ENCODE measurements at regions of chr20 and their contacts with region 1.

Region 1: DNA sequence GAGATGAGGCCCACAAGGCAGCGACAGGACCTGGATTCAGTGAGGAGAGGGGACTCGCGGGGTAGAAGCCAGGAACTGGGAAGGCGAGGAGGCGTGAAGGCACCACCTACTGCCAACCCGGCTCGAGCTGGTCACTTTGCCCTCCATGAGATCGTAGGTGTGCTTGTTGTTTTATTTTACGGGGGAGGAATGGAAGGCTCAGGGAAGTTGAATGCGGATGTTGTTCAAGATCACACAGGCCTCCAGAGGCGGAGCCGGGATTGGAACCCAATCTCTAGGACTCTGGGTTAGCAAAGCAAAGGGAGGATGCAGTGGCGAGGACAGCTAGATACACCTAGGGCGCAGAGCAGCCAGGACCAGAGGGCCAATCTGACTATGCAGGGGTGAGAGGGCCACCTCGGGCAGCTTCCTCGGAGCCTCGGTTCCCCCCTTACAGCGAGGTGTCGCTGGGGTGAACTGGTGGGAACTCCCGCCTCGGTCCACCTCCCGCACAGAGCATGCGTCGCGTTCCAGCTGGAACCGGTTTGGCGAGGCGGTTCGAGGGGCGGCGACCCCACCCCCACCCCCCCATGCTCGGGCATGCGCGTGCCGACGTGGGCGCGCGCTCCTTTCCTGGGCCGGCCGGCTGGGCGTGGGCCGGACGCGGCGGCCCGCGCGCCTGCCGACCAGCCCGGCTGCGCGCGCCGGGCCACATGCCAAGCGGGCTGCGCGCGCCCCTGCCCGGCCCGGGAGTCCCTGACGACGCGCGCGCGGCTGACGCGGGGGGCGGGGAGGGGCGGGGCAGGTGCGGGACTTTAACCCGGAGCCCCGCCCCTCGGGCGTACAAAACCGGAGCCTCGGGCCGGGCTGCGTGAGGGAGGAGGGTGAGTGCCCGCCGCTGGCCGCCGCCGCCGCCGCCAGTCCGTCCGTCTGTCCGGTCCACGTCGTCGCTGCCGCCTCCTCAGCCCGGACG is 80.4 kb upstream of the MYL9 start:
- DNase-seq: peak; percentile 85
- H3K4me3 ChIP-seq: peak overlapping the region in 1 of 3 experiments; percentile 74
- H3K27ac ChIP-seq: peak overlapping the region; percentile 2
- H3K4me1 ChIP-seq: peaks cover 28% of the 10 kb centered on the region
- H3K27me3 ChIP-seq: no peaks in the 10 kb centered on the region
- CTCF ChIP-seq: no peak
- POLR2A ChIP-seq: peak; percentile 79

Region 2: GRCh38 chr20:36113566-36114250 is 347.2 kb before region 1 on chr20:
- CTCF ChIA-PET with region 1: no interaction called
- POLR2A ChIA-PET with region 1: no interaction called
- dilution Hi-C with region 1: no loop called
- intact Hi-C with region 1: no loop called
- DNase-seq: no peak
- H3K4me3 ChIP-seq: no peak overlapping the region
- H3K27ac ChIP-seq: no peak overlapping the region
- H3K4me1 ChIP-seq: no peaks in the 10 kb centered on the region
- H3K27me3 ChIP-seq: peaks cover 3 to 13% of the 10 kb centered on the region in 2 experiments
- CTCF ChIP-seq: no peak
- POLR2A ChIP-seq: no peak

Region 3: GRCh38 chr20:36132802-36133211 is 328.1 kb before region 1 on chr20:
- CTCF ChIA-PET with region 1: no interaction called
- POLR2A ChIA-PET with region 1: no interaction called
- dilution Hi-C with region 1: no loop called
- intact Hi-C with region 1: no loop called
- DNase-seq: no peak
- H3K4me3 ChIP-seq: no peak overlapping the region
- H3K27ac ChIP-seq: no peak overlapping the region
- H3K4me1 ChIP-seq: no peaks in the 10 kb centered on the region
- H3K27me3 ChIP-seq: no peaks in the 10 kb centered on the region
- CTCF ChIP-seq: no peak
- POLR2A ChIP-seq: no peak

Region 4: GRCh38 chr20:36493013-36493800 is 32.3 kb after region 1 on chr20:
- CTCF ChIA-PET with region 1: interaction called, 11 read pairs
- POLR2A ChIA-PET with region 1: no interaction called
- dilution Hi-C with region 1: no loop called
- intact Hi-C with region 1: loop called (anchors 2 kb)
- DNase-seq: peak; percentile 34
- H3K4me3 ChIP-seq: no peak overlapping the region
- H3K27ac ChIP-seq: no peak overlapping the region
- H3K4me1 ChIP-seq: peaks cover 19% of the 10 kb centered on the region
- H3K27me3 ChIP-seq: no peaks in the 10 kb centered on the region
- CTCF ChIP-seq: peak; percentile 22 to 33
- POLR2A ChIP-seq: no peak

Region 5: GRCh38 chr20:36541227-36541763 is 80.4 kb after region 1 on chr20 and contains the start of gene MYL9:
- CTCF ChIA-PET with region 1: no interaction called
- POLR2A ChIA-PET with region 1: no interaction called
- dilution Hi-C with region 1: no loop called
- intact Hi-C with region 1: loop called (anchors 5 kb)
- DNase-seq: peak; percentile 43
- H3K4me3 ChIP-seq: peak within 1 kb of the TSS; percentile 26 to 77 (median 55)
- H3K27ac ChIP-seq: peak within 1 kb of the TSS; percentile 53
- H3K4me1 ChIP-seq: peaks cover 11% of the 10 kb centered on the region
- H3K27me3 ChIP-seq: no peaks in the 10 kb centered on the region
- CTCF ChIP-seq: no peak
- POLR2A ChIP-seq: peak; percentile 49
- total RNA-seq, gene MYL9: 90.4 and 116 TPM in 2 replicates

Region 6: GRCh38 chr20:36573103-36573794 is 112.3 kb after region 1 on chr20 and contains the start of gene TGIF2:
- CTCF ChIA-PET with region 1: no interaction called
- POLR2A ChIA-PET with region 1: no interaction called
- dilution Hi-C with region 1: no loop called
- intact Hi-C with region 1: loop called (anchors 2 kb)
- DNase-seq: peak; percentile 84
- H3K4me3 ChIP-seq: peak within 1 kb of the TSS; percentile 55 to 87 (median 85)
- H3K27ac ChIP-seq: peak within 1 kb of the TSS; percentile 71
- H3K4me1 ChIP-seq: peaks cover 24% of the 10 kb centered on the region
- H3K27me3 ChIP-seq: no peaks in the 10 kb centered on the region
- CTCF ChIP-seq: no peak
- POLR2A ChIP-seq: peak; percentile 78
- total RNA-seq, gene TGIF2: 21.0 and 27.9 TPM in 2 replicates

Region 7: GRCh38 chr20:36745927-36746659 is 285.2 kb after region 1 on chr20 and contains the start of gene NDRG3:
- CTCF ChIA-PET with region 1: no interaction called
- POLR2A ChIA-PET with region 1: no interaction called
- dilution Hi-C with region 1: no loop called
- intact Hi-C with region 1: loop called (anchors 5 kb)
- DNase-seq: peak; percentile 92
- H3K4me3 ChIP-seq: peak within 1 kb of the TSS; percentile 39 to 76 (median 66)
- H3K27ac ChIP-seq: peak within 1 kb of the TSS; percentile 30
- H3K4me1 ChIP-seq: peaks cover 11% of the 10 kb centered on the region
- H3K27me3 ChIP-seq: no peaks in the 10 kb centered on the region
- CTCF ChIP-seq: no peak
- POLR2A ChIP-seq: peak; percentile 68
- total RNA-seq, gene NDRG3: 27.7 and 28.4 TPM in 2 replicates

Region 8: DNA sequence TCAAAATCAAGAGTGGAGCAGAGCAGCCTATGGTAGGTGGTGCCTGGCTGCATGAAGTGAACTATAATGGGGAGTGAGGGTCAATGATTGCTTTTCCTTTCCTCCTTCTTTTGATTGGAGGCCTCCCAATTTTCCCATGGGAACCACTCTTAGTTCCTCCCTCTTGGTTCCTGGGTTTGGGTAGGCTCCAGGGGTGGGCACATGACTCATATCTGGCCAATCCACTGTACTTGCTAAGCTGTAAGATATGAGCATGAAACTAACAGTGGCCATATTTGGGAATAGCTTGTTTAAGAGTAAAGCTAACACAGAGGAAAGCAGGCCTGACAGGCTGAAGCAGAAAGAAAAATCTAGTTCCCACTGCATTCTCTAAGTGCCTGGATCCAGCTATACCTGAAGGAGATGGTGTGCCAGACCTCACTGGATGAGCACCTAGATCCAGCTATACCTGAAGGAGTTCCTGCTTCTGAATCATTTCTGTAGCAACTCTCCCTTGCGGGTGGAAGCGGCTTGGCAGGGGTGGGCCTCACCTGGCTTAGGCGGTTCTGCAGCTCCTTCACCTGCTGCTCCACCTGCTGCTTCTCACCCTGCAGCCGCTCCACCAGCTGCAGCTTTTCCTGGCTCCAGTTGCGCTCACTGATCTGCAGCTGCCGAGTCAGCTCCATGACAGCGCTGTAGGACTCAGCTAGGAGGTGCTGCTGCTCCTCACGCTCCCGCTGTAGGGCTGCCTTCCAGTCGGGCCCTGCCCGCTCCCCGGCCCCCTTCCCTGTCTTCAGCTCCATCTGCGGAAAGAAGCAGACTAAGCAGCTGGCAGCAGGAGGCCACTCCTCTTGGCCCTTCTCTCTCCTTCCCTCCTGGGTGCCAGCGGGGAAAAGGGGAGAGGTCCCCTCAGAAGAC is 341.6 kb after region 1 on chr20:
- CTCF ChIA-PET with region 1: no interaction called
- POLR2A ChIA-PET with region 1: no interaction called
- dilution Hi-C with region 1: no loop called
- intact Hi-C with region 1: no loop called
- DNase-seq: no peak
- H3K4me3 ChIP-seq: no peak overlapping the region
- H3K27ac ChIP-seq: no peak overlapping the region
- H3K4me1 ChIP-seq: no peaks in the 10 kb centered on the region
- H3K27me3 ChIP-seq: no peaks in the 10 kb centered on the region
- CTCF ChIP-seq: no peak
- POLR2A ChIP-seq: no peak